Mammary epithelial cell (primary cell): ENCODE measurements at regions of chr14 and their contacts with region 1.

Region 1: DNA sequence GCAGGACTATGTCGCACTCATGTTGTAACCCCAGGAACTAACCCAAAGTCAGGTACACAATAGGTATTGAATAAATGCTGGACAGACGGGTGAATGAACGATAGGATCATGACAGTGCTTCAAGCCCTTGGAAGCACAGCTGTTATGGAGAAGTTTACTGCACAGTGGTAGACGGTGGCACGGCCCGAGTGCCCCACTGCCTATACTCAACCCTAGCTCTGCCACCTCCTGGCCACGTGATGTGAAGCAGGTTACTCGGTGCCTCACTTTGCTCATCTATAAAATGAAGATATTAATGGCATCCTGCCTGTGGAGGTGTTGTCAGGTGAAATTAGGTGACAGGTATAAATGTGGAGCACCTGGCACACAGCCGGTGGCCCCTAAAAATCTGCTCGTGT is 5.8 kb downstream of the ASB2 start:
- DNase-seq: peak; percentile 42
- H3K4me3 ChIP-seq: no peak overlapping the region
- H3K27ac ChIP-seq: no peak overlapping the region
- H3K4me1 ChIP-seq: peaks cover 11% of the 10 kb centered on the region
- H3K27me3 ChIP-seq: no peaks in the 10 kb centered on the region
- CTCF ChIP-seq: peak; percentile 39 to 58

Region 2: DNA sequence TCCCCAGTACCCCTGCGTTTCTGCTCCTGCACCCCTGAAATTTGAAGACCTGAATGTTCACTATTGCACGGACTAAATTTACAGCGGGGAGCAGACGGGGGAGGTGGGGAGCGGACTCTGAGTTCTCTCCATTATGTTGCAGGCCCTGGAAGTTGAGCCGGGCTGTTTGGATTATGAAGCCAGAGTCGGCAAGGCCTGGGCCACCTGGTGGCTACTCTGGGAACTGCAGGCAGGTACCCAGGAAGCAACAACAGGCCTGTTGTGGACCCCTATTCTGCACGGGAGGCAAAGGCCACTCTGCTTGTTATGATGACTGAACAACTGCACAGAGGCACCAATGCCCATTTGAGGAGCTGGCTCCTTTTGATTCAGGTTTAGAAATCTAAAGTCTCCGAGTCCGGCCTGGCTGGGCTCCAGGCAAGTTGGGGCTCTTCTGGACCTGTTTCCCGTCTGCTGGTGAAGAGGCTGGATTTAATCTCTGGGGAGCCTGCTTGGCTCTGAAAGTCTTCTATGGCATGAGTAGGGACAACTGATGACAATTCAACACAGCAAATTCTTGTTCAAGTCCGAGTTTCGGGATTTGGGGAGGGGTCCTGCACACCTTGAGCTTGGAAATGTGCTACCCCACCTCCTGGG is 77.5 kb before region 1 on chr14:
- CTCF ChIA-PET with region 1: no interaction called
- dilution Hi-C with region 1: no loop called
- in situ Hi-C with region 1: no loop called
- intact Hi-C with region 1: no loop called
- DNase-seq: peak; percentile 41
- H3K4me3 ChIP-seq: no peak overlapping the region
- H3K27ac ChIP-seq: no peak overlapping the region
- H3K4me1 ChIP-seq: no peaks in the 10 kb centered on the region
- H3K27me3 ChIP-seq: no peaks in the 10 kb centered on the region
- CTCF ChIP-seq: peak; percentile 98 to 99

Region 3: DNA sequence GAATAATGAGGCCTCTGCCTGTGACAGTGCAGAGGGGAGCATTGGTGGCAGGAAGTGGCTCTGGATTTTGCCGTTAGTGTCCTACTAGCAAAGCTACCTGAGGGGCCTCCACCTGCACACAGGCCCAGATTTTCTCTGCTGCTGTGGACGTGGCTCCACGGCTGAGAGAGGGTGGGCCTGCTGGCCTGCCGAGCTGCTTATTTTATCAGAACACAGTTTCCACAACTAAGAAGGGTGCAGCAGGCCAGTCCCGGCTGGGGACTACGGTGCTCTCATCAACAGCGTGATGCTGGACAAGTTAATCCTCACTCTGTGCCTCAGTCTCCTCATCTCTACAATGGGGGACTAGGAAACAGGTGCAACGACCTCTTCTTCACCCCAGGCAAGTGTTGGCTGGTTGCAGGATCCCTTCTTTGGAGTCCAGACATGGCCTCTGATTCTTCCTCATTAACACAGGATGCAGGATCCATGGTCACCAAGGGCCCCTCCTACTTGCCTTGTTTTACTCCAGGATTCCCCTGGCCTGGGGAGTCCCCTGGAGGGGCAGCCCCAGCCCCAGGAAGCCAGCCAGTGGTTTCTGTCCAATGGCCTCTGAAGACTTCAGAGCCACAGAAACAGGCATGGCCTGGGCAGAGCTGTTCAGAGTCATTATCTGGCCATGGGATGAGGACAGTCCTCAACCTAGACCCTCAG is 40.1 kb before region 1 on chr14:
- CTCF ChIA-PET with region 1: no interaction called
- dilution Hi-C with region 1: loop called (anchors 5 kb)
- in situ Hi-C with region 1: no loop called
- intact Hi-C with region 1: no loop called
- DNase-seq: no peak
- H3K4me3 ChIP-seq: no peak overlapping the region
- H3K27ac ChIP-seq: no peak overlapping the region
- H3K4me1 ChIP-seq: no peaks in the 10 kb centered on the region
- H3K27me3 ChIP-seq: no peaks in the 10 kb centered on the region
- CTCF ChIP-seq: no peak

Region 4: DNA sequence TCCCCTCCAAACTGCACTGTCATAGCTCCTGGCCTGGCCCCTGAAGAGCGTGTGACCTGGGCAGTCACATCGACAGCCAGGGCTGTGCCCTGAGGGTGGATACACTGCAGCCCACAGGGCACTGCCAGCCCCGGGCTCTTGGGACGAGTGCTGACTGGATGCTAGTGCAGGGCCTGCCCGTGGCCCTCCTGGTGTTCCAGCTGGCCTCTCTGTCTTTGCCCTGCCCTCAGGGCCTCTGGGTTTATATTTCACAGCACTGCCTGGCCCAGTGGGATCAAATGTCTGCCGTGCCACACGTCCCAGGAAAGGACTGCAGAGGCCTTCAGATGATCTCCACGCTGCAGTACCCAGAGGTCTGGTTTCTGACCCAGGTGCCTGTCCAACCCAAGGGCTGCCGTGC is 16.4 kb after region 1 on chr14:
- CTCF ChIA-PET with region 1: interaction called, 4 read pairs
- dilution Hi-C with region 1: no loop called
- in situ Hi-C with region 1: no loop called
- intact Hi-C with region 1: loop called (anchors 2 kb)
- DNase-seq: no peak
- H3K4me3 ChIP-seq: no peak overlapping the region
- H3K27ac ChIP-seq: no peak overlapping the region
- H3K4me1 ChIP-seq: peaks cover 21% of the 10 kb centered on the region
- H3K27me3 ChIP-seq: no peaks in the 10 kb centered on the region
- CTCF ChIP-seq: no peak

Region 5: GRCh38 chr14:94001501-94002396 is 31.2 kb after region 1 on chr14:
- CTCF ChIA-PET with region 1: no interaction called
- dilution Hi-C with region 1: no loop called
- in situ Hi-C with region 1: no loop called
- intact Hi-C with region 1: loop called (anchors 2 kb)
- DNase-seq: peak; percentile 65
- H3K4me3 ChIP-seq: no peak overlapping the region
- H3K27ac ChIP-seq: no peak overlapping the region
- H3K4me1 ChIP-seq: peaks cover 17% of the 10 kb centered on the region
- H3K27me3 ChIP-seq: no peaks in the 10 kb centered on the region
- CTCF ChIP-seq: peak; percentile 97 to 100

Region 6: DNA sequence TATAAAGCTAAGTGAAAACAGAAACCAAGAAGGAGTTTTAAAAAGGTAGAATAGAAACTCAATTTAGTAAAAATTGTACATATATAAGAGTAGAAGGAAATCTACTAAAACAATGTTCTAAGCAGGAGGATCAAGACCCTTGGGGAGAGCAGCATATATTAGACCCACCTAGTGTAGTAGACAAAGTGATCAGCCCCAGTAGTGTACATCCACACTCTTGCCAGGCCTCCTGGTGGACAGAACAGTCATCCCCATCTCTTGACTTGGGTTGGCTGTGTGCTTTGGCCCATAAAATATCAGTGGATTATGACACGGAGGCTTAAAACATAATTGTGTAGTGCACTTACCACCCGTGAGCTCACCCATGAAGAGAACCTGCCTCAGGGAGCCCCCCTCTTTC is 44.7 kb after region 1 on chr14:
- CTCF ChIA-PET with region 1: no interaction called
- dilution Hi-C with region 1: loop called (anchors 5 kb)
- in situ Hi-C with region 1: no loop called
- intact Hi-C with region 1: no loop called
- DNase-seq: no peak
- H3K4me3 ChIP-seq: no peak overlapping the region
- H3K27ac ChIP-seq: no peak overlapping the region
- H3K4me1 ChIP-seq: no peaks in the 10 kb centered on the region
- H3K27me3 ChIP-seq: no peaks in the 10 kb centered on the region
- CTCF ChIP-seq: no peak

Region 7: DNA sequence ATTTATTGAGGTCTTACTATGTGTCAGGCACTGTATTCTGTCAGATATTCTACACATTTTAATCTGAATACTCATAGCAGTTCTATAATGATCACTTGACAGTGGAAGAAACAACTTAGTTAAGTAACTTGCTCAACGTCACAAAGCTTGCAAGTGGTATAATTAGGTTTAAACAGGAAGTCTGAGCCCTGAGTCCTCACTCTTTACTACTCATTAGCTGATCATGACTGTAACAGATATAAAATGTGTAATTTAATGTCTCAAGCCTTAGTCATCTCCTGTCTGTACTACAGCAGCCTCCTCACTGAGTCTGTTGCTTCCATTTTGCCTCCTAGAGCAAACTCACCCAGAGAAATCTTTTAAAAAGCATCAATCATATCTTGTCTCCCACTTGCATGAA is 242.5 kb after region 1 on chr14:
- CTCF ChIA-PET with region 1: no interaction called
- dilution Hi-C with region 1: no loop called
- in situ Hi-C with region 1: no loop called
- intact Hi-C with region 1: no loop called
- DNase-seq: peak; percentile 84
- H3K4me3 ChIP-seq: no peak overlapping the region
- H3K27ac ChIP-seq: peak overlapping the region; percentile 53
- H3K4me1 ChIP-seq: peaks cover 9% of the 10 kb centered on the region
- H3K27me3 ChIP-seq: no peaks in the 10 kb centered on the region
- CTCF ChIP-seq: no peak